Cardiac septum (tissue), 1 donor: ENCODE measurements at regions of chr3 and their contacts with region 1.

Region 1: DNA sequence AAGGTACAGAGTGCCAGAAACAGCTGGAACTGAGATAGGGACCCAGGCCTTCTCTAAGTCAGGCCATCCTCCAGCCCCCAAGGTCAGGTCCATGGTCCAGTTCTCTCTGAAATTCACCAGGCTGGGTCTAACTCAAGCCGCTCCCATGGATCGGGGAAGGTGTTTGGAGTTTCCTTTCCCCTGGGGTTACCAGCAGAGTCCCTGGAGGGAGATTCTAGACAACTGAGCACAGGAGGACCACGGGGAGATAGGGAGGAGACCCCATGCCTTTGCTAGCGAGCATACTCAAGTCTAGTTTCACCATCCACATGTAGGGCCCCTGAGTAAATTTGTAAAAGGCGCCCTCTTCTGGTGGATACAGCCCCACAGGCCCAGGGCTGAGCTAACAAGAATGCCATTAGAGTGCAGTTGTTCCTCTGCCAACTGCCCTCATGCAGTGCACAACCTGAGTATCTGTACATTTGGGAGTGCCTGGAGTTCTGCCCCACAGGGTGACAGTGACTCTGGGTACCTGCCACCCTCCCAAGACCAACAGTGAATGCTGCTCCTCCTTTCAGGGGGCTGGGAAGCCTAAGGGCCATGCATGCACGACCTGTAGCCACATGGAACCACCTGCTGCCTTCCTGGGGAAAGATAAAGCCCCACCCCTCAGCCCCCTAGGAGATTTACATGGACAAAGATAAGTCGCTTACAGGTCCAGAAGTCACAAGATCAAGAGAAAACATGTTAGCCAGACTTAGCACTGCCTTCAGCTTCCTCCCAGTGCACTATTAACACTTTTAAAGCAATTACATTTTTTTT is 89.0 kb downstream of the IQSEC1 start:
- DNase-seq: no peak

Region 2: GRCh38 chr3:12891985-12892839 is 92.0 kb before region 1 on chr3:
- intact Hi-C with region 1: loop called (anchors 5 kb)
- DNase-seq: no peak

Region 3: GRCh38 chr3:12954891-12955650 is 29.2 kb before region 1 on chr3:
- intact Hi-C with region 1: loop called (anchors 2 kb)
- DNase-seq: peak; percentile 92

Region 4: DNA sequence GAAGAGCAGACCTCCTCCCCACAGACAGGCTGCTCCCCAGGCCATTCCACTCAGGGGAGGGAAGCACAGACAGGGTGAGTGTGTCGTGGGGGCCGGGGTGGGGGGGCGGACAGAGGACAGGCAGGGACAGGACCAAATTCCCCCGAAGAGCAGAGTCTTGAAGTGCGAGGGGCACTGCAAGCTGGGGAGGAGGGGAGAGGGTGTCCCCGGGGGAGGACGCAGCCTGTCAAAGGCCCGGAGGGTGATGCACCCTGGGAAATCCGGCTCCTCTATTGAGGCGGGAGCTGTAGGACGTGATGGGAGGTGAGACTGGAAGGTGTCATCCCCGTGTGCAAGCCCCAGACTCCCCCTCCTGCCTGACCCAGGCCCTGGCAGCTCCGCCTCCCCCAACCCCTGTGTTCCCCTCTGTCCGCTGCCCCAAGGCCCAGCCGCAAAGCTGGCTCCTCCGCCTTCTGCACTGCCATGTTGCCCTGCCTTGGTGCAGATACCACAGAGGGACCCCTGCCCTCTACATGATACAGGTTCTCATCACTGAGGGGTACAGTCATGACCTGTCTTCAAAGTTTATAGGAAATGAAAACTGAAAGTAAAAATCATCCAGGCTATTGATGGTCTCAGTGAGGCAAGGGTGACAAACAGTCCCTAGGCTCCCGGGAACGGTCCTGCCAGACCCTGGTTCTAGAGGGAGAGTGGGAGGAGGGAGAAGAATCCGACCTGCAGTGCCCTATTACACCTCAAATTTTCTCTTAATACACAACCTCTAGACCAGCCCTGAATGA is 165.3 kb after region 1 on chr3:
- intact Hi-C with region 1: no loop called
- DNase-seq: peak; percentile 54